Gastrocnemius medialis (tissue), 4 donors: ENCODE measurements at regions of chr14 and their contacts with region 1.

Region 1: DNA sequence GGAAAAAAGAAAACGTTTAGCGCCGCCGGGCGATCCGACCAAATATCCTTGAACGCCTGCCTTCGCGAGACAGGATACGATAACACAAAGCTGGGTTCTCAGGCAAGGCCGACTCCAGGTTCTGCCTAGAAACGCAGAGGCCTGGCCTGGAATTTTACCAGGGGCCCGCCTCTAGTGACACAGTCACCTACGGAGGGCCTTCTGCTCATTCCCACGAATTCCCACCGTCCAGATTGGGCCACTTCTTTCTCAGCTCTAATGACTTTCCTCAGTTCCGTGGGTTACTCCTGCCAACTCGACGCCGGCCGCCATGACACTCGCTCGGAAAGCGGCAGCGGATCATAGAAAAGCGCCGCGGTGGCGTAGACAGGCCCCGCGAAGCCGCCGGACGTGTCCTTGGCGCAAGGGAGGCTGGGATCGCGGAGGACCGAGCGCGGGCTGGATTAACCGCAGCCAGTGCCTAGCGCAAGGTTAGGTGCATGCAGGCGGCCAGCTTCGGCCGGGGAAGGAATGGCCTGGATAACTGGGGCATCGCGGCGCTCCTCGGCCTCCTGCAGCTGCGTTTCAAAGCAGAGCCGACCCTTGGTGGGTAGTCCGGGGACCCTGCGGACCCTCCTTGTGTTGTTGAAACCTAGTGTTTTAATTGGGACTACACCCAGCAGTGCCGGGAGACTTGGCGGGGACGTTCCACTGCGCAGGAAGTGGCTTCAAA is at the start of gene TRIP11:
- DNase-seq: peak; percentile 90 to 93
- ATAC-seq: peak; percentile 95 to 96
- H3K4me3 ChIP-seq: peak within 1 kb of the TSS; percentile 84 to 99 (median 94)
- H3K27ac ChIP-seq: peak within 1 kb of the TSS; percentile 96 to 100 (median 97)
- H3K4me1 ChIP-seq: peaks cover 38 to 42% of the 10 kb centered on the region in 2 donors
- H3K27me3 ChIP-seq: no peaks in the 10 kb centered on the region
- CTCF ChIP-seq: peak in 1 of 5 experiments; percentile 16
- POLR2A ChIP-seq: peak; percentile 58 to 63
- total RNA-seq, gene TRIP11: 22.0 to 39.6 (median 30.2) TPM

Region 2: DNA sequence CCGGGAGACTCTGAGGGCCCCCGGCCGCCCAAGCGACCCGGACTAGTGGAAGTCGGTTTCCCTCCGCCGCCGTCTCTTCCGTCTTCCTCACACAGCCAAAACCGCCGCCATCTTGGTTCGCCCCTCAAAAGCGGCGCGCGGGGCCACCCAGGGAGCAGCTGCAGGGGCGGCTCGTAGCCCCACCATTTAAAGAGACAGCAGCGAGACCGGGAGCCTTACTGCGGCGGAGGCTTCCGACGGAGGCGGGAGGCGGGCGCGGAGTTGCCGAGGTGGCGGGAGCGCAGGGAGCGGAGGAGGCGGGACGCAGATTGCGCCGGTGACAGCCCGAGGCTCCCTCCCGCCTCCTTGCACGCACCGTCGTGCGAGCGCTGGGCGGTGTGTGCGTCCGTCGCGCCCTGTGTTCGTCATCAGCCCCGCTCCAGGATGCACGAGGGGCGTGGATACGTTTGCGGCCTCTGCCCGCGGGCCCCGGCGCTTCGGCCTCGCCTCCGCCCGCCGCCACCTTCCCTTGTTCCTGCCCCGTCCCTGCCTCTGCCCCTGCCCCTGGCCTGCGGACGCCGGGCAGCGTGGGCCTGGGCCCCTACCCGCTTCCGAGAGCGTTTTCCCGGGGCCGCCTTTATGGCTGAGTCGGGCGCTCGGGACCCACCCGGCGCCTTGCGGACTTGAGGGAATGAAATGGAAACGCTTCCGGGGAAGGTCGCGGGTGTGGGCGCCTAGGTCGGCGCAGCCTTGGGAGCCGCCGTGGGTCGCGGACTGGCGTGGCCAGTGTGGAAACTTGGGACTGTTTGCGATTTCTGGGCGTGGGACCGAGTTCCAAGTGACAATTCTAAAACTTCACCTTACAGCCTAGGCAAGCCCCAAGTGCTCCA is 529.5 kb before region 1 on chr14 and contains the start of gene PPP4R3A:
- in situ Hi-C with region 1: loop called in 1 of 4 experiments (anchors 25 kb)
- intact Hi-C with region 1: loop called (anchors 5 kb)
- DNase-seq: peak; percentile 90 to 92
- ATAC-seq: peak; percentile 88 to 92
- H3K4me3 ChIP-seq: peak within 1 kb of the TSS; percentile 86 to 96 (median 90)
- H3K27ac ChIP-seq: peak within 1 kb of the TSS; percentile 92 to 97 (median 96)
- H3K4me1 ChIP-seq: peaks cover 19 to 30% of the 10 kb centered on the region in 2 donors
- H3K27me3 ChIP-seq: peaks cover 0 to 3% (median 0%) of the 10 kb centered on the region in 3 donors
- CTCF ChIP-seq: no peak
- POLR2A ChIP-seq: peak; percentile 85 to 89
- total RNA-seq, gene PPP4R3A: 38.8 to 53.3 (median 44.6) TPM

Region 3: DNA sequence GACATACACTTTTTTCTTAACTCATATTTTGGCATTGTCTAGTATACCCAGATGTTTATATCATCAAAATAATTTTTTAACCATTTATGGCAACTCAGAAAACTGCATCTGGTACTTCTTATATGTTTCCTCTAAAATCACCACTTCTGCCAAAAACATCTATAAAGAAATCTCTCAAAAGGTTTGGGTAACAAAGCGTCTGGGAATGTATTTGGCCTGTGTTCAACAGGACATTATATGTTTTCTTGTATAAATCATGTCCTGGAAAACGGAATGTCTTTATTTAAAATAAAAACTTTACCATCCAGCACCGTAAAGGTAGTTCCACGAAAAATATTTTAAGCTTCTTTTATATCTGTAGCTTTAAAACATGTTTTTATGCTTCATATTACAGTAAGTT is 56.3 kb before region 1 on chr14:
- in situ Hi-C with region 1: no loop called
- intact Hi-C with region 1: no loop called
- DNase-seq: no peak
- ATAC-seq: no peak
- H3K4me3 ChIP-seq: no peak overlapping the region
- H3K27ac ChIP-seq: no peak overlapping the region
- H3K4me1 ChIP-seq: peaks cover 8 to 32% of the 10 kb centered on the region in 2 donors
- H3K27me3 ChIP-seq: no peaks in the 10 kb centered on the region
- CTCF ChIP-seq: no peak
- POLR2A ChIP-seq: no peak

Region 4: DNA sequence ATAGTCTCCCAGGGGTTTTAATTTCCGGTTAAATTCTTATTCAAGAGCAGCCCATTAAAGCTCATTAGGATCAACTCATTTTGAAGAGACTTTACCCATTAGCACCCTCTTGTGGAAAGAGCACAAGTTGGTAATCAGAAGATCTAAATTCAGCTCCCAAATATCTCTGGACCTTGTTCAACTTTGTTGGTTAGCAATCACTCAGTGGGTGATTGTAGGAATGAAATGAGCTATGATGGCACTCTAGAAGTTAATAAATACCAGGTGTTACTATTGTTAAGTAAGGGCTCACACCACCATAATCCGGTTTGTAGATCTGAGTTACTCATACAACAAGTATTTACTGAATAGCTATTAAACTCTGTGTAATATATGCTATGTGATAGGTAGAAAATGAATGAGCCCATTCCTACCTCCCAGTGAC is 42.9 kb before region 1 on chr14:
- in situ Hi-C with region 1: no loop called
- intact Hi-C with region 1: loop called (anchors 5 kb)
- DNase-seq: no peak
- ATAC-seq: peak in 1 of 2 donors; percentile 61
- H3K4me3 ChIP-seq: no peak overlapping the region
- H3K27ac ChIP-seq: peak overlapping the region in 1 of 4 donors; percentile 12
- H3K4me1 ChIP-seq: no peaks in the 10 kb centered on the region
- H3K27me3 ChIP-seq: no peaks in the 10 kb centered on the region
- CTCF ChIP-seq: peak in 3 of 5 experiments; percentile 14 to 54 (median 52)
- POLR2A ChIP-seq: no peak

Region 5: DNA sequence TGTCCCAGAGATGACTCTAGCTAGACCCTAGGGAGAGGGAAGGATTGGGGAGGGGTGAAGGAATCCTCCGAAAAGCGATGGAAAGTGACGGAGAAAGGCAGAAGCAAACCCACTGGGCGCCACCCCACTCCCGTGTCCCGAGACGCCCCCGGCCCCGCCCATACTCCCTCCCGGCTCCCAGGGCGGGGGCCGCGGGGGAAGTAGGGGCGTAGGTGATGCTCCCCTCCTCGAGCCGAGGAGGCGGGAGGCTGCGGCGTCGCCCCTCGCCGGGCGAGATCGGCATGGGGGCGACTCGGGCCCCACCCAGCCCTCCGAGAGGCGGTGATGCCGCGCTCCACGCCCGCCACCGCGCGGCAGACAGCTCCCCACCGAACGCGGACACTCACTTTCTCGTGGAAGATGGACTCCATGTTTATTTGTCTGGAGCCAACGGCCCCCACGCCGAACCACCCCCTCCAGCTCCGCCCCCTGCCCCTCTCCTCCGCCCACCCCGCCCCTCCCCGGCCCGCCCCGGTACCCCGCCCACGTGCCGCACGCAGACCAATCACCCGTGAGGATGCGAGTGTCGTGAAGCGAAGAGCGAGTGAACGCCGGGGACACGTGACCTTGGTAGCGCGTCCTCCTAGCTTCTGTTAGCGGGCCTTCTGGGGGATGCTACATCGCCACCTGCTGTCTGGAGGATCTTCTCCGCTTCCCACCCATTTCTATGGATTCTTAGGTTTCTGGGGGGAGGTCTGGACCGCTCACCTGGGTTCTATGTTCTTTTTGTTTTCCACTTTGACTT is 66.5 kb after region 1 on chr14 and contains the start of gene ATXN3:
- in situ Hi-C with region 1: loop called in 1 of 4 experiments (anchors 5 kb)
- intact Hi-C with region 1: loop called (anchors 1 kb)
- DNase-seq: peak; percentile 97 to 98
- ATAC-seq: peak; percentile 91 to 95
- H3K4me3 ChIP-seq: peak within 1 kb of the TSS; percentile 92 to 98 (median 95)
- H3K27ac ChIP-seq: peak within 1 kb of the TSS; percentile 96 to 97 (median 97)
- H3K4me1 ChIP-seq: peaks cover 10 to 24% of the 10 kb centered on the region in 2 donors
- H3K27me3 ChIP-seq: no peaks in the 10 kb centered on the region
- CTCF ChIP-seq: peak; percentile 51 to 86 (median 70)
- POLR2A ChIP-seq: peak; percentile 48 to 71
- total RNA-seq, gene ATXN3: 6.4 to 18.9 (median 8.5) TPM

Region 6: GRCh38 chr14:92121670-92122350 is 81.9 kb after region 1 on chr14 and contains the starts of genes CPSF2 and NDUFB1:
- in situ Hi-C with region 1: no loop called
- intact Hi-C with region 1: loop called (anchors 5 kb)
- DNase-seq: peak; percentile 76 to 80
- ATAC-seq: peak; percentile 91 to 93
- H3K4me3 ChIP-seq: peak within 1 kb of the TSS; percentile 84 to 95 (median 91)
- H3K27ac ChIP-seq: peak within 1 kb of the TSS; percentile 92 to 99 (median 96)
- H3K4me1 ChIP-seq: peaks cover 37 to 41% of the 10 kb centered on the region in 2 donors
- H3K27me3 ChIP-seq: no peaks in the 10 kb centered on the region
- CTCF ChIP-seq: peak in 3 of 5 experiments; percentile 25 to 46 (median 39)
- POLR2A ChIP-seq: peak; percentile 59 to 67
- total RNA-seq, gene CPSF2: 52.2 to 146 (median 58.6) TPM
- total RNA-seq, gene NDUFB1: 409 to 1,081 (median 454) TPM

Region 7: GRCh38 chr14:92793709-92794546 is 754.1 kb after region 1 on chr14 and contains the start of gene GOLGA5:
- in situ Hi-C with region 1: no loop called
- intact Hi-C with region 1: loop called (anchors 1 kb)
- DNase-seq: peak; percentile 95 to 97
- ATAC-seq: peak; percentile 94 to 95
- H3K4me3 ChIP-seq: peak within 1 kb of the TSS; percentile 76 to 95 (median 92)
- H3K27ac ChIP-seq: peak within 1 kb of the TSS; percentile 87 to 92 (median 90)
- H3K4me1 ChIP-seq: peaks cover 15 to 26% of the 10 kb centered on the region in 2 donors
- H3K27me3 ChIP-seq: no peaks in the 10 kb centered on the region
- CTCF ChIP-seq: peak in 4 of 5 experiments; percentile 23 to 33 (median 30)
- POLR2A ChIP-seq: peak; percentile 73 to 83
- total RNA-seq, gene GOLGA5: 27.0 to 34.8 (median 33.8) TPM